AG04450 (cell line): ENCODE measurements at regions of chr6 and their contacts with region 1.

Region 1: GRCh38 chr6:112043032-112044007 is 10.6 kb upstream of the CCN6 start:
- DNase-seq: peak; percentile 84
- H3K4me3 ChIP-seq: peak overlapping the region; percentile 70
- H3K27ac ChIP-seq: peak overlapping the region; percentile 74
- H3K27me3 ChIP-seq: no peaks in the 10 kb centered on the region
- CTCF ChIP-seq: peak; percentile 98

Region 2: DNA sequence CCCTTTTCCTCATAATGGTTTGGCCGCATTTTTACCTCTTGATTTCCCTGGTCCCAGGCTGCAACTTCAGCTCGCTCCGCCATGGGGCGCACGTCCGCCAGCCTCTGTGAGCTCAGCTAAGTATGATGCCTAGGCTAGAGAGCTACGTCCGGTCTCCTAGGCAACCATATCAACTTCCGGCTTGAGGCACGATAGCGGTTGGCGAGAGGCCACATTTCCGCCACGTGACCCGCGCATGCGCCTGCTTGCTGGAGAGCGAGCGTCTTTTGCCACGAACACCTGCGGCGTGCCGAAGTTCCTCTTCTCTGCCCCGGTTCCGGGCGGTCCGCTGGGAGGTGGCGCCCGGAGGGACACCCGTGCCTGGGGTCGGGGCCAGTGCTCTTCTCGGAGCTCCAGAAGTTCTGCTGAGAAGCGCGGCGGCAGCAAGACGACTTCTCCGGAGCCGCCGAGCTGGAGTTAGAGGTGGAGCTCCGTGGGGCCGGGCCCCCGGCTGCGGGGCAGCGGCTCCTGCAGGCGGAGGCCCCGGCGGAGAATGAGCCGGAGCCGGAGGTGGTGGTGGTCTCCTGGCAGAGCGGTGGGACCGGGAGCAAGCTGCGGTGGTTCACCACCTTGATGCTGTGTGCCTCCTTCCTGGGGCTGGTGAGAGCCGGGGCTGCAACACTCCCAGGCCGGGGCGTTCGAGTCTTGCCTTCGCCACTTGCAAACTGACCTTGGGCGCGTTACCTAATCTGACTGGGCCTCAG is 784.1 kb before region 1 on chr6:
- CTCF ChIA-PET with region 1: interaction called, 12 read pairs
- POLR2A ChIA-PET with region 1: no interaction called
- DNase-seq: peak; percentile 99
- H3K4me3 ChIP-seq: peak overlapping the region; percentile 88
- H3K27ac ChIP-seq: peak overlapping the region; percentile 91
- H3K27me3 ChIP-seq: no peaks in the 10 kb centered on the region
- CTCF ChIP-seq: peak; percentile 92

Region 3: GRCh38 chr6:111703723-111704122 is 339.6 kb before region 1 on chr6:
- CTCF ChIA-PET with region 1: interaction called, 175 read pairs
- POLR2A ChIA-PET with region 1: no interaction called
- DNase-seq: no peak
- H3K4me3 ChIP-seq: no peak overlapping the region
- H3K27ac ChIP-seq: no peak overlapping the region
- H3K27me3 ChIP-seq: no peaks in the 10 kb centered on the region
- CTCF ChIP-seq: no peak

Region 4: GRCh38 chr6:111850295-111850937 is 192.9 kb before region 1 on chr6:
- CTCF ChIA-PET with region 1: interaction called, 5 read pairs
- POLR2A ChIA-PET with region 1: interaction called, 10 read pairs
- DNase-seq: no peak
- H3K4me3 ChIP-seq: no peak overlapping the region
- H3K27ac ChIP-seq: no peak overlapping the region
- H3K27me3 ChIP-seq: no peaks in the 10 kb centered on the region
- CTCF ChIP-seq: no peak

Region 5: DNA sequence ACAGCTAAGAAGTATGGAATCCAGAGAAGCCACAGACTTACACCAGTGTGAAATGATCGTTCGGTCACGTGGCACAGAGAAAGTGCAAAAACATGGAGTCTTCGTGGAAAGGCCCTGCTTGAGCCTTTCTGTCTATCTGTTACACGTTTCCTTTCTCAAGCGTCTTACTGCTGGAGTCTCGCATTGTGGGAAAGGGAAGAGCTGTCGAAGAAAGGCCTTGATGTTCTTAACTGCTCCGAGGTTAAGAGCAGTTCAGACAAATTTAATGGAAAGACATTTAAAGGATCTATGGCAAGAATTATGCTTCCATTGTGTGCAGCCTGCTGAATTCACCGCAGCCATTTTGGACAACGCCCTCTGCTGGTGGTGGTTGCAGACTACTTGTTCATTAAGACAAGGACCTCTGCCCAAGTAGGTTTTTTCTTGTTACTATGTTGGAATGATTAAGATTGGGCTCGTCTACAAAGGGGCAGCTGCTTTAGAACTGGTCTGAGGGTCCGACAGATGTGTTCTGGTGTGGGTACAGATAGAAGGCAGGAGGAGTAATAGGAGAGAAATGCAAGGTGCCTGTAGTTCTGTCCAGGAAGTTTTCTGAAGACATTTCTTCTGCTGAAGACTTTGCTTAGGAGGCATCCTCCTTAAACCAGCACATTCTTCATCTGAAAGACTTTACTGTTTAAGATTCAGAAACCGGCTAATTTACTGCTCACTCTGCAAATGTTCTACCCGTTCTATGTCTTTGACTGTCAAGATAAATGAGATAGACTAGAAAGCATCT is 14.1 kb before region 1 on chr6:
- CTCF ChIA-PET with region 1: interaction called, 39 read pairs
- POLR2A ChIA-PET with region 1: no interaction called
- DNase-seq: peak; percentile 41
- H3K4me3 ChIP-seq: no peak overlapping the region
- H3K27ac ChIP-seq: no peak overlapping the region
- H3K27me3 ChIP-seq: peaks cover 14% of the 10 kb centered on the region
- CTCF ChIP-seq: peak; percentile 77